Breast epithelium (tissue), 4 donors: ENCODE measurements at regions of chr9 and their contacts with region 1.

Region 1: GRCh38 chr9:128002959-128003358 is 22.2 kb upstream of the EEIG1 start:
- DNase-seq: no peak
- H3K4me3 ChIP-seq: no peak overlapping the region
- H3K27ac ChIP-seq: peak overlapping the region in 1 of 2 donors; percentile 19
- H3K4me1 ChIP-seq: no peaks in the 10 kb centered on the region
- H3K27me3 ChIP-seq: no peaks in the 10 kb centered on the region
- CTCF ChIP-seq: no peak
- POLR2A ChIP-seq: no peak

Region 2: DNA sequence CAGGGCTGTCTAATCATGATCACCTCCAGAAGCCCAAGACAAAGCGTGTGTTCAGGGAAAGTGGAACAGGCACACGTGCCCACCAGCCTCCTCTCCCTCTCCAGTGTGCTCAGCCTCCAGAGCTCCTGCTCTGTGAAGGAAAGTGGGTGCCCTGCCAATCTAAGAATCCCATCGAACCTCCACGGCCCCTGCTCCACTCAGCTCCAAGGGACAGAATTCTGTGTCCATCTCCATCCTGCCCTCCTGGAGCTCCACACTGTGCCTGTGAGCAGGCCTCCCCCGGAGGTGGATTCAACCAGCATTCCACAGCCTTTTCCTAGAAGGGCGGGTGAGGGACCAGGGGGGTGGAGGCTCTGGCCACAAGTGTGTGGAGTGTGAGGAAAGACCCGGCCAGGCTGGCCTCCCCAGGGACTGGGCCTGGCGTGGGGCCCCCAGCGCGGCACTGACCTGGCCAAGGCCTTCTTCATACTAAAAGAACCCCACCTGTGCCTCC is 28.1 kb before region 1 on chr9:
- intact Hi-C with region 1: loop called (anchors 1 kb)
- DNase-seq: no peak
- H3K4me3 ChIP-seq: peak overlapping the region in 2 of 3 donors; percentile 7 to 50
- H3K27ac ChIP-seq: peak overlapping the region; percentile 98 to 99
- H3K4me1 ChIP-seq: peaks cover 31 to 69% of the 10 kb centered on the region in 2 donors
- H3K27me3 ChIP-seq: no peaks in the 10 kb centered on the region
- CTCF ChIP-seq: no peak
- POLR2A ChIP-seq: no peak

Region 3: DNA sequence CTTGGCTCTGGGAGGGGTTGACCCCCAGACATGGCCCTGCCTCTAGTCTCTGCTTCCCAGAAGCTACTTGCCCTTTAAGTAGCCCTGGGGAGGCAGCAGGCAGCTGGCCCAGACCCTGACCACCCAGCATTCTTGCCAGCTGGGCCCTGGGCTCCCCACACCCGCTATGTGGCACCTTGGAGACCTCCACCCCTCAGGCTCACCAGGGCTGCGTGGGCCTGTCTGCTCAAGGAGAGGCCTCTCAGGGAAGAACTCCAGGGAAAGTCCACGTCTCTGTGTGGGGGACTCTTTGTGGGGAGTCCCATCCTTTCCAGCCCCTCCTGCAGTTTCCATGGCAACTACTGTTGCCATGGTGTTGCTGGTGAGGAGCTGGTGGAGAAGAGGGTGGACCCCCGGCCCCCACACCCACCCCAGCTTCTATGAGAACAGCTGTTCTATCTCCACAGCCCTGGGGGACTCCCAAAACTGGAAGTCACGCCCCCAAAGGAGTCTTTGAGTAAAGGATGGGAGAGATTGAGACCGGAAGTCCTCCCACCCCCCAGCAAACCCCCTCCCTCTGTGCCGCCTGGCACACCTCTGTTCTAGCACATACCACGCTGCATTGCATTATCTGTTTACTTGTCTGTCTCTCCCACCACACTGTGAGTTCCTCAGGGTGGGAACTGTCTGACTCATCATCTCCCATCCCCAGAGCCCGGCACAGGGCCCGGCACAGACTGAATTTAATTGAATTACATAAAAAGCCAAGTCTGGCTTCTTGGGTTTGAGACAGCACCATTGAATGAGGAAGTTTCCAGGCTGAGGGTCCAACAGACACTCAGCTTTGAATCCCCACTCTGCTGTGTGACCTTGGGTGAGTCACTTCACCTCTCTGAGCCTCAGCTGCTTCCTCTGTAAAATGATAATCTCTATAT is 212.8 kb after region 1 on chr9:
- intact Hi-C with region 1: no loop called
- DNase-seq: no peak
- H3K4me3 ChIP-seq: no peak overlapping the region
- H3K27ac ChIP-seq: peak overlapping the region; percentile 71 to 85
- H3K4me1 ChIP-seq: no peaks in the 10 kb centered on the region
- H3K27me3 ChIP-seq: no peaks in the 10 kb centered on the region
- CTCF ChIP-seq: no peak
- POLR2A ChIP-seq: no peak